ENCODE measurements at regions of chr3 and their contacts with region 1.

Region 1: GRCh38 chr3:58491506-58492402 is at the start of gene KCTD6:
- DNase-seq: peak; percentile 87
- H3K4me3 Mint-ChIP-seq: peak within 1 kb of the TSS; percentile 93
- H3K27ac Mint-ChIP-seq: peak within 1 kb of the TSS; percentile 85
- H3K4me1 Mint-ChIP-seq: peaks cover 54% of the 10 kb centered on the region
- H3K27me3 Mint-ChIP-seq: peaks cover 40% of the 10 kb centered on the region
- total RNA-seq, gene KCTD6: 7.0 and 8.9 TPM in 2 replicates

Region 2: GRCh38 chr3:56837196-56837955 is 1654.4 kb before region 1 on chr3:
- intact Hi-C with region 1: no loop called
- DNase-seq: no peak
- H3K4me3 Mint-ChIP-seq: no peak overlapping the region
- H3K27ac Mint-ChIP-seq: no peak overlapping the region
- H3K4me1 Mint-ChIP-seq: peaks cover 13% of the 10 kb centered on the region
- H3K27me3 Mint-ChIP-seq: no peaks in the 10 kb centered on the region

Region 3: GRCh38 chr3:58237238-58237940 is 254.4 kb before region 1 on chr3 and contains the start of gene ABHD6:
- intact Hi-C with region 1: loop called (anchors 1 kb)
- DNase-seq: peak; percentile 78
- H3K4me3 Mint-ChIP-seq: peak within 1 kb of the TSS; percentile 90
- H3K27ac Mint-ChIP-seq: peak within 1 kb of the TSS; percentile 67
- H3K4me1 Mint-ChIP-seq: peaks cover 12% of the 10 kb centered on the region
- H3K27me3 Mint-ChIP-seq: peaks cover 32% of the 10 kb centered on the region
- total RNA-seq, gene ABHD6: 9.2 and 10.1 TPM in 2 replicates

Region 4: GRCh38 chr3:58414538-58415197 is 77.1 kb before region 1 on chr3:
- intact Hi-C with region 1: no loop called
- DNase-seq: peak; percentile 42
- H3K4me3 Mint-ChIP-seq: no peak overlapping the region
- H3K27ac Mint-ChIP-seq: no peak overlapping the region
- H3K4me1 Mint-ChIP-seq: peaks cover 12% of the 10 kb centered on the region
- H3K27me3 Mint-ChIP-seq: no peaks in the 10 kb centered on the region

Region 5: DNA sequence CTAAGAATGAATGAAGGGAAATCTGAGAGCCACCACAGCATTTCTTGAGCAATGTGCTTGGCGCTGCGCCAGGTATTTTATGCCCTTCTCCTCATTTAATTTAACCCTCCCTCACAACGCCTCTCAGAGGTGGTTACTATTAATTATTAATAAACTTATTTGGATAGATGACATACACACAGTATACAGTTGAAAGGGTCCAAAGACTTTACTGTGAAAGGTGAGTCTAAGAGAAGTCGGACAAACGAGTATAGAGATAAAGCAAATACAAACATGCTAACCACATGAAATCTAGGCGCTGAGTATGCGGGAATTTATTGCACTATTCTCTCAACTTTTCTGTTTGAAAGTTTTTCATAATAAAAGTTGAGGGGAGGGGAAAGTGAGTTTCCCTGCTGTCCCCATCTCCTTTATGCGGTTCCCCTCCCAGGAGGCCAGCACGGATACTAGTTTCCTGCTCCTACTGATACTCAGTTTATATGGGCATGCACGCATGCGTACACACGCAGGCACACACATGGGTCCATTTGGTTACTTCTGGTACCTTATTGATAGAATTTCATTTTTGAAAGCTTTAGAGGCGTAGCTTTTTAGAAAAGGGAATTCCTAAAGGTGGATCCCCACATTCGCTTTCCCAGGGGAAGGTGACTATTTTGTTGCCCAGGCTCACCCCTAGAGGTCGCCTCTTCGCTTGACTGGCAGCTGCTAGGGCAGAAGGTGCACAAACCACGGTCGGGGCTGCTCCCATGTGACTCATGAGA is 28.4 kb before region 1 on chr3:
- intact Hi-C with region 1: loop called (anchors 1 kb)
- DNase-seq: peak; percentile 71
- H3K4me3 Mint-ChIP-seq: no peak overlapping the region
- H3K27ac Mint-ChIP-seq: no peak overlapping the region
- H3K4me1 Mint-ChIP-seq: peaks cover 13% of the 10 kb centered on the region
- H3K27me3 Mint-ChIP-seq: peaks cover 17% of the 10 kb centered on the region

Region 6: DNA sequence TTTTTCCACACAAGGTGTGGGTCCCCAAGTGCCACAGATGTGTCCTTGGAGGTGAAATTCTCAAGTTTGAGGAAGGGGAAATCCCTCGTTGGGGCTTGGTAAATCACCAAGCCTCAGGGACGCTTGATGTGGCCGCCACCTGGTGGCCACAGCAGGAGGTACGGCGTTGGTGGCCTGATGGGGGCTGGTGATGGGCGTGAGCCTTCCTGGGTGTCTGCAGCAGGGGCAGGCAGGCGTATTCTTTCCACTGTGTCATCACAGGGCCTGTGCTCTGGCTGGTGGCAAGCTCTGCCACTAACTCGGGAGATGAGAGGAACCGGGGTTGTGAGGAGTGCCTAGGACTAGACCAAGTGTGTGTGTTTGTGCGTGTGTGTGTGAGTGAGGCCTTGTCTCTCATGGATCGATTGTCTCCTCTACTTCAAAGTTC is 41.1 kb after region 1 on chr3:
- intact Hi-C with region 1: loop called (anchors 1 kb)
- DNase-seq: peak; percentile 75
- H3K4me3 Mint-ChIP-seq: no peak overlapping the region
- H3K27ac Mint-ChIP-seq: peak overlapping the region; percentile 8
- H3K4me1 Mint-ChIP-seq: peaks cover 13% of the 10 kb centered on the region
- H3K27me3 Mint-ChIP-seq: peaks cover 15% of the 10 kb centered on the region

Region 7: GRCh38 chr3:58568572-58569286 is 77.0 kb after region 1 on chr3:
- intact Hi-C with region 1: no loop called
- DNase-seq: peak; percentile 55
- H3K4me3 Mint-ChIP-seq: no peak overlapping the region
- H3K27ac Mint-ChIP-seq: peak overlapping the region; percentile 1
- H3K4me1 Mint-ChIP-seq: no peaks in the 10 kb centered on the region
- H3K27me3 Mint-ChIP-seq: peaks cover 3% of the 10 kb centered on the region

Measured in activated T-helper 1 cell treated with anti-CD3 and anti-CD28 coated beads, Interleukin-12 subunit alpha, Interleukin-12 subunit beta, Interleukin-2, Interleukin-4 antibody, amounts not matched to agents 30 ng/mL and 10 ng/mL and 1 ng/mL, durations not matched to agents 14 hours and 24 hours and 36 hours (primary cell).